ENCODE measurements at regions of chr7 and their contacts with region 1.

Region 1: GRCh38 chr7:141701489-141702046 is 398 bp downstream of the DENND11 start:
- DNase-seq: peak; percentile 79 to 90
- ATAC-seq: peak; percentile 85 to 91 (median 86)
- H3K4me3 ChIP-seq: peak overlapping the region; percentile 50
- H3K4me3 Mint-ChIP-seq: peak overlapping the region; percentile 90
- H3K27ac ChIP-seq: peak overlapping the region; percentile 58
- H3K27ac Mint-ChIP-seq: peak overlapping the region; percentile 80 to 89
- H3K4me1 ChIP-seq: peaks cover 27% of the 10 kb centered on the region
- H3K4me1 Mint-ChIP-seq: peaks cover 35 to 41% of the 10 kb centered on the region in 2 donors
- H3K27me3 ChIP-seq: no peaks in the 10 kb centered on the region
- H3K27me3 Mint-ChIP-seq: peaks cover 0 to 5% of the 10 kb centered on the region in 2 donors
- CTCF ChIP-seq: no peak

Region 2: DNA sequence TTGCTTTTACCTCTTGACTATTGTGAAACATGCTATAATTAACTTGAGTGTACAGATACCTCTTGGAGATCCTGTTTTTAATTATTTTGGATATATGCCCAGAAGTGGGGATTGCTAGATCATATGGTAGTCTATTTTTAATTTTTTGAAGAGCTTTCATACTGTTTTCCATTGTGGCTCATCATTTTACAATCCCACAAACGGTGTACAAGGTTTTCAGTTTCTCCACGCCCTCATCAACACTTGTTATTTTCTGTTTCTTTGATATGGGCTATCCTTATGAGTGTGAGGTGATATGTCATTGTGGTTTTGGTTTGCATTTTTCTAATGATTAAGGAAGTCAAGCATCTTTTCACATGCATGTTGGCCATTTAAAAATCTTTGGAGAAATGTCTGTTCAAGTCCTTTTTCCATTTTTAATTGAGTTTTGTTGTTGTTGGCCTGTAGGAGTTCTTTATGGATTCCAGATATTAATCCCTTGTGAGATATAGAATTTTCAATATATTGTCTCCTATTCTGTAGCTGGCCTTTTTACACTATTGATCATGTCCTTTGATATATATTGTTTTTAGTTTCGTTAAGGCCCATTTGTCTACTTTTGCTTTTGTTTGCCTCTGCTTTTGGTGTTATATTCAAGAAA is 142.9 kb before region 1 on chr7:
- intact Hi-C with region 1: loop called (anchors 2 kb)
- DNase-seq: peak in 1 of 2 donors; percentile 74
- ATAC-seq: peak; percentile 67 to 78 (median 74)
- H3K4me3 ChIP-seq: no peak overlapping the region
- H3K4me3 Mint-ChIP-seq: peak overlapping the region; percentile 88
- H3K27ac ChIP-seq: peak overlapping the region; percentile 86
- H3K27ac Mint-ChIP-seq: peak overlapping the region; percentile 89 to 97
- H3K4me1 ChIP-seq: peaks cover 30% of the 10 kb centered on the region
- H3K4me1 Mint-ChIP-seq: peaks cover 68 to 74% of the 10 kb centered on the region in 2 donors
- H3K27me3 ChIP-seq: no peaks in the 10 kb centered on the region
- H3K27me3 Mint-ChIP-seq: no peaks in the 10 kb centered on the region
- CTCF ChIP-seq: no peak

Region 3: GRCh38 chr7:141737834-141738591 is 36.4 kb after region 1 on chr7 and contains the start of gene SSBP1:
- intact Hi-C with region 1: loop called (anchors 1 kb)
- DNase-seq: peak; percentile 80 to 97
- ATAC-seq: peak; percentile 84 to 91 (median 86)
- H3K4me3 ChIP-seq: peak within 1 kb of the TSS; percentile 81
- H3K4me3 Mint-ChIP-seq: peak within 1 kb of the TSS; percentile 100
- H3K27ac ChIP-seq: peak within 1 kb of the TSS; percentile 96
- H3K27ac Mint-ChIP-seq: peak within 1 kb of the TSS; percentile 93 to 99
- H3K4me1 ChIP-seq: peaks cover 8% of the 10 kb centered on the region
- H3K4me1 Mint-ChIP-seq: peaks cover 39 to 47% of the 10 kb centered on the region in 2 donors
- H3K27me3 ChIP-seq: no peaks in the 10 kb centered on the region
- H3K27me3 Mint-ChIP-seq: no peaks in the 10 kb centered on the region
- CTCF ChIP-seq: peak; percentile 70
- total RNA-seq, gene SSBP1: 98.7 to 112 (median 106) TPM